ENCODE measurements at regions of chr3 and their contacts with region 1.

Region 1: DNA sequence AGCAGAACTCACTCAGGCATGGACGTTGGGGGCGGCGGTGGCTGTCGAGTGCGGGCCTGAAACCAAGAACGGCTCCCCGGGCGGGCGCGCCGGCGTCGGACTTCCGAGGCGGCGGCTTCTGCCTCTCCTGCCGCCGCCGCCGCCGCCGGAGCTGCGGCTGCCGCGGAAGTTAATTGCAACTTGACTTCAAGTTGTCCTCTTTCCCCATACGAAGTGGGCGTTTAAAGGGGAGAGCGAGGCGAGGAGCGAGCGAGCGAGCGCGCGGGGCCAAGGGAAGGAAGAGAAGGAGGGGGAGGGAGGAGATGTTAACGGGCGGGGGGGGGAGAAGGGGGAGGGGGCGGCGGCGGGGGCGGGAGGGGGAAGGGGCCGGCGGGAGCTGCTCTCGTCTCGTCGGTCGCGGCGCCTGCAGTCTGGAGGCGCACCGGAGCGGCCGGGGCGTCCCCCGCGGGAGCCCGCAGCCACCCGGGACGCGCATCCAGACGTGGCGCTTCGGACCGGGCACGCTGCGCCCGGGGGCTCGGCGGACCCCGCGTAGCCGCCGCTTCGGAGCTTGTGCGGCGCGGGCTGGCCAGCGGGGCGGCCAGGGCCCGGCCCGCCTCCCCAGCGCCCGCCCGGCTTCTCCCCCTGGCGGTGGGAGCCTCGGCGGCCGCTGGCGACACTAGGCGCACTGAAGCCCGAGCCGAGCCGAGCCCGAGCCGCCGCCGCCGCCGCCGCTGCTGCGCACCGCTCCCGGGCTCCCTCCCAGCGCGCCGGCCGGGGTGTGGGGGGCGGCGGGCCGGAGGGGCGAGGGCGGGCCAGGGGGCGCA is 19.7 kb upstream of the SATB1 start:
- DNase-seq: peak; percentile 89
- H3K4me3 Mint-ChIP-seq: peak overlapping the region; percentile 94
- H3K27ac Mint-ChIP-seq: peak overlapping the region; percentile 96
- H3K4me1 Mint-ChIP-seq: peaks cover 34% of the 10 kb centered on the region
- H3K27me3 Mint-ChIP-seq: no peaks in the 10 kb centered on the region

Region 2: GRCh38 chr3:18423401-18424212 is 21.2 kb before region 1 on chr3:
- CTCF ChIA-PET with region 1: interaction called, 11 read pairs
- POLR2A ChIA-PET with region 1: interaction called, 3 read pairs
- DNase-seq: peak; percentile 62
- H3K4me3 Mint-ChIP-seq: peak overlapping the region; percentile 88
- H3K27ac Mint-ChIP-seq: peak overlapping the region; percentile 93
- H3K4me1 Mint-ChIP-seq: peaks cover 59% of the 10 kb centered on the region
- H3K27me3 Mint-ChIP-seq: no peaks in the 10 kb centered on the region

Region 3: DNA sequence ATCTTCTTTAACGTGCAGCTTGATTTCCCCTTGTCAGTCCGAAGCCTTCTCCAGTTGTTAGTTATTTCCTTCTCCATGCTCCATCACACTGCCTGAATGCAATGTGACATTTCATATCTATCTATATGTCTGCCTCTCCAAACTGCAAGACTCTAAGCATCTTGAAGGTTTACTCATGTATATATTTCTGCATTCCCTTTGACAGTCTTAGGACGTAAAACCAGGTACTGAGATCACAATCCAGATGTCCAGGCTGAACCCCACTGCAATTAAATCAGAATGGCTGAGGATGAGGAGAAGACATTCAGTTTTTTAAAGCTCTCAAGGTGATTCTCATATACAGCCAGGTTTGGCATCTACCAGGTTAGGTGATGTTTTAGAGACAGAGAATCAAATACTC is 13.5 kb before region 1 on chr3:
- CTCF ChIA-PET with region 1: interaction called, 14 read pairs
- POLR2A ChIA-PET with region 1: interaction called, 3 read pairs
- DNase-seq: no peak
- H3K4me3 Mint-ChIP-seq: peak overlapping the region; percentile 76
- H3K27ac Mint-ChIP-seq: peak overlapping the region; percentile 83
- H3K4me1 Mint-ChIP-seq: peaks cover 72% of the 10 kb centered on the region
- H3K27me3 Mint-ChIP-seq: no peaks in the 10 kb centered on the region

Measured in activated CD4-positive, alpha-beta T cell treated with anti-CD3 and anti-CD28 coated beads, Interleukin-2, amount 10 ng/mL, durations not matched to agents 7 days and 5 days (primary cell).